ENCODE measurements at regions of chr6 and their contacts with region 1.

Region 1: DNA sequence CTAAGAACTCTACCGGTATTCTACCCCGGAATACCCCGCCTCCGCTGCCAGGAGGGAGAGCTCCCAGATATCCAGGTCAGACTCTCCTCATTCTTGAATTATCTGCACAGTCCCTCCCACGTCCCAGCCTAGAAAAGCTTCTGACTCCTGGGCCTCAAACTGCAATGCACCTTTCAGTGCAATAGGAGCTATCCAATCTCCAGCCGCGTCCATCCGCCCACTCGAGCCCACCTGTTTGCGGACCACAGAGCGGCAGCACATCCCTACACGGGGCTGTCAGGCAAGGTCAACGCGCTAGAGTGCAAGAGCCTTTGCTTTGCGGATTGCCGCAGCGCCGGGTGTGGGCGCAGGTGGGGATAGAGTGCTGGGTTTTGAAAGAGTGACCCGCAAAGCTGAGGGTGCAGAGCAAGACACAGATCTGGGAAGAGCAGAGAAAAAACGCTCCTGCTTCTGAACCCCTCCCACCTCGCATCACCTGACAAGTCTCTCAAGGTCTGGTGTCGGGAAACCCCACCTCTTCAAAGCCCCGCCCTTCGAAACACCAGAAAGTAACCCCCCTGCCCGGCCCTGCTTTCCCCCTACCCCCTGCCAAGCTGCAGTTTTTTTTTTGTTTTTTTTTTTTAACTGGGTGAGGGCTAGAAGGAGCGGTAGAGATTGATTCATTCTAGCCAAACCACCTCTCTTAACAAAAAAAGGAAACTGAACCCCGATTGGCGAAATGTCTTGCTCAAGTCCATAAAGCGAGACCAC is 1.3 kb downstream of the TAPBP start:
- DNase-seq: peak; percentile 85 to 88
- H3K4me3 ChIP-seq: peak overlapping the region; percentile 85
- H3K4me3 Mint-ChIP-seq: peak overlapping the region; percentile 98
- H3K27ac Mint-ChIP-seq: peak overlapping the region; percentile 97
- H3K4me1 ChIP-seq: peaks cover 15% of the 10 kb centered on the region
- H3K4me1 Mint-ChIP-seq: peaks cover 8% of the 10 kb centered on the region
- H3K27me3 ChIP-seq: no peaks in the 10 kb centered on the region
- H3K27me3 Mint-ChIP-seq: no peaks in the 10 kb centered on the region
- CTCF ChIP-seq: peak in 1 of 2 experiments; percentile 19

Region 2: DNA sequence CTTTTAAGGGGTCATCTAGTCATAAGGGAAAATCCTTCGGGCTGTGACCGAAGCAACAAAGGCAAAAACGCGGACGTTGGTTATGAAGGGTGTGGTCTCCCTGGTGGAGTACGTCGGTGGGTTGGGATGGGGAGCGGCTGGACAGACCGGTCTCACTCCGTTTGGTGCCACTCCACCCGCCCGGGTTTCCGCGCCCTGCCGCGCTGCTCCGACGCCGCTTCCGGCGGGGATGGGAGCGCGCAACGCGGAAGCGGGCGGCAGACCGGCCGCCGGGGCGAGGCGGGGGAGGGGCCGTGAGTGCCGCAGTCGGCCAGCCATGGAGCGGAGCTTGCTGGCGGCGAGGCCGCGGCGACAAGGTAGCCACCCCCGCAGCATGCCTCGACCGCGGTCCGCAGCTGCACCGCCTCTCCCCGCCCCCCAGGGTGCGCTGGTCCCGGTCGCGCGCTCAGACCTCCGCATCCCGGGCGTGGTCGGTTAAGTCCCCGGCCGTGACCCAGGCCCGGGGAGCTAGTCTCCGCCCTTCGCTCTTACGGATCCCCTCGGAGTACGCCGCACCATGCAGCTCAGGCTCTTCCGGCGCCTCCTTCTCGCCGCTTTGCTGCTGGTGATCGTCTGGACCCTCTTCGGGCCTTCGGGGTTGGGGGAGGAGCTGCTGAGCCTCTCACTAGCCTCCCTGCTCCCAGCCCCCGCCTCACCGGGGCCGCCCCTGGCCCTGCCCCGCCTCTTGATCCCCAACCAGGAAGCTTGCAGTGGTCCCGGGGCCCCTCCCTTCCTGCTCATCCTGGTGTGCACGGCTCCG is 35.5 kb before region 1 on chr6 and contains the start of gene B3GALT4:
- CTCF ChIA-PET with region 1: interaction called, 21 read pairs
- POLR2A ChIA-PET with region 1: interaction called, 7 read pairs
- intact Hi-C with region 1: loop called (anchors 1 kb)
- DNase-seq: peak in 1 of 2 experiments; percentile 55
- H3K4me3 ChIP-seq: no peak within 1 kb of the TSS
- H3K4me3 Mint-ChIP-seq: peak within 1 kb of the TSS; percentile 56
- H3K27ac Mint-ChIP-seq: peak within 1 kb of the TSS; percentile 18
- H3K4me1 ChIP-seq: peaks cover 18% of the 10 kb centered on the region
- H3K4me1 Mint-ChIP-seq: peaks cover 18% of the 10 kb centered on the region
- H3K27me3 ChIP-seq: no peaks in the 10 kb centered on the region
- H3K27me3 Mint-ChIP-seq: no peaks in the 10 kb centered on the region
- CTCF ChIP-seq: peak; percentile 10 to 44
- total RNA-seq, gene B3GALT4: 0.34 and 0.67 TPM in 2 replicates

Region 3: DNA sequence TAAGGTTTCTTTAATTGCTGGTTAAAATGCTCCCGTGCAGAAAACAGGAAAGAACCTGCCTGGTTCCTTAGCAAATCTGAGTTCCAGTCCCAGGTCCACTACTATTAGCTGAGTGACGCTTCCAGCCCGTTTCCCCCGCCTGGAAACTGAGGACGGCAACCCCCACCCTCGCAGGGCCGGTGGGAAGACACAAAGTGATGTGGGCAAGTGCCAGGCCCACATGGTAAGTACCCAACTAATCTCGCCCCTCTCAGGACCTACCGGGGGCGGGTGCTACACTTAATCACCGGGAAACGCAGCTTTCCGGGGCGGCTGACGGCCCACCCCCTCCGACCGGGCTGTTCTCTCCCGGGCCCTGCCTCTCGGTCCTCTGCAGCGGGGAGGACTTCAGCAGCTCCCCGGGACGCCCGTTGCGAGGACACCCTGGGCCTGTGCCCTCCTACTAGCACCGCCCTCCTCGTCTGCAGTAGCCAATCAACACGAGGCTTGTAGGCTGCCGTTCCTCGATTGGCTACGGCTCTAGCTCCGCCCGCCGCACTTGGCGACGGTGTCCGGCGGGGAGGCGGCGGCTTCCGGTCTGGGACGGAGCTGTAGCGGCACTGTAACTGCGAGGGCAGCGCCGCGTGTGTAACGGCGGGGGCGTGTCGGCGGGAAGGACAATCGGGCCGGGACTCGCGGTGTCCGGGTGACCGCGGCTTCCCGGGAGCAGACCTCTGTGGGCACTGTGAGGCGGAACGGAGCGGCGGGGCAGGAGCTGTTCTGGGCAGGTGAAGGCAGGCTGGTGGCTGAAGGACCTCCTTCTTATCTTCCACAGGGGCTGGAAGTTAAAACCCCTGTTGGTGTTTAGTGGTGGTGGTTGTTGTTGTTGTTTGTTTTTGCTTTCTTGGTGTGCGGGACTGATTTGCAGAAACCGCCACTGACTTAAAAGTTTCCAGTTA is 141.7 kb after region 1 on chr6 and contains the start of gene ZBTB9:
- CTCF ChIA-PET with region 1: no interaction called
- POLR2A ChIA-PET with region 1: no interaction called
- intact Hi-C with region 1: no loop called
- DNase-seq: peak; percentile 96 to 97
- H3K4me3 ChIP-seq: peak within 1 kb of the TSS; percentile 79
- H3K4me3 Mint-ChIP-seq: peak within 1 kb of the TSS; percentile 97
- H3K27ac Mint-ChIP-seq: peak within 1 kb of the TSS; percentile 80
- H3K4me1 ChIP-seq: no peaks in the 10 kb centered on the region
- H3K4me1 Mint-ChIP-seq: peaks cover 19% of the 10 kb centered on the region
- H3K27me3 ChIP-seq: no peaks in the 10 kb centered on the region
- H3K27me3 Mint-ChIP-seq: no peaks in the 10 kb centered on the region
- CTCF ChIP-seq: no peak
- total RNA-seq, gene ZBTB9: 11.4 and 12.5 TPM in 2 replicates

Measured in Caco-2 (cell line).